Activated B cell treated with CpG ODN at 0.5 μM for 24 hours (primary cell): ENCODE measurements at regions of chr6 and their contacts with region 1.

Region 1: DNA sequence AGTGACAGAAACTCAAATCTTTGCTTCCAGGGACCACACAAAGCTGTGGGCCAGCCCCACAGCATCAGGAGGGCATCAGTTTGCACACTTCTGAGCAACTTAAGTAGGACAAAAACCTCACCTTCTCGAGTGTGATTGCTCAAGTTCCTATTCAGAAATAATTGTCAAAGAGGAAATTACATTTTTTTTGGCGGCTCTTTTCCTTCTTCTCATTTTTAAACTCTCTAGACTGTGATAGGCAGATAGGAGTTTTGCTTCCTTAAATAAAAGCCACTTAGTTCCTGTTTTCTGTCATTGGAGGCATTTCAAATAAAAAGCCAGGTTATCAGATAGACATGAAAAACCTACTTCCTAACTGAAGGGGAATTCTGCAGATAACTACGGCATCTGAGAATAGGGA is 11.2 kb upstream of the TAGAP start:
- DNase-seq: no peak
- ATAC-seq: peak; percentile 68
- H3K4me3 Mint-ChIP-seq: peak overlapping the region; percentile 70
- H3K27ac Mint-ChIP-seq: peak overlapping the region; percentile 88
- H3K4me1 Mint-ChIP-seq: peaks cover 79% of the 10 kb centered on the region
- H3K27me3 Mint-ChIP-seq: no peaks in the 10 kb centered on the region
- CTCF ChIP-seq: no peak

Region 2: GRCh38 chr6:159068904-159069578 is 13.0 kb after region 1 on chr6:
- CTCF ChIA-PET with region 1: no interaction called
- POLR2A ChIA-PET with region 1: interaction called, 5 read pairs
- intact Hi-C with region 1: loop called (anchors 1 kb)
- DNase-seq: no peak
- ATAC-seq: peak; percentile 42
- H3K4me3 Mint-ChIP-seq: peak overlapping the region; percentile 2
- H3K27ac Mint-ChIP-seq: peak overlapping the region; percentile 47
- H3K4me1 Mint-ChIP-seq: peaks cover 48% of the 10 kb centered on the region
- H3K27me3 Mint-ChIP-seq: no peaks in the 10 kb centered on the region
- CTCF ChIP-seq: no peak

Region 3: DNA sequence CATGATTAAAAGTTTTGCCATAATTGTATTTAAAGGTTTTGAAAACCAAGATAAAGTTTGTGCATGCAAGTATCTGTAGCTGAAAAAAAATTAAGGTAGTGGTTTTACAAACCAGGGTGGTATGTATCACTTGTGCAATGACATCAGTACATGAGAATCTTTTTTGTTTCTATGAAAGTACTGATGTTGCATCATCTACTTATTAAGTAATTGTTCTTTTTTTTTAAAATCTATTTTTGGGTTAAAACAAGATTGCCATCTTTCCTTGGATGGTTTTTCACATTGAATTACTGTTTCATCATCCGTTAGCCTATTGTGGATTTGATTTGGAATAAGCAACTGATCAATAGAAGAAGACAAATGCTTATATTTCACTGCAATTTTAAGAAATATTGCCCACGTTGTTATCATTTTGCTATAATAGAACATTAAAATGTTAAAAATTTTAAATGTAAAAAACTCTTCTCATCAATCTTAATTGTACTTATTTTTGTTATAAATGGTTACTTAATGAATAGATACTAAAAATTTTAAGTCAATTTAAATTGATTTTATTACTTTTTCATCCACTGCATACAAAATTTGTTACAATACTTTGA is 28.6 kb after region 1 on chr6:
- CTCF ChIA-PET with region 1: no interaction called
- POLR2A ChIA-PET with region 1: interaction called, 11 read pairs
- intact Hi-C with region 1: no loop called
- DNase-seq: no peak
- ATAC-seq: no peak
- H3K4me3 Mint-ChIP-seq: no peak overlapping the region
- H3K27ac Mint-ChIP-seq: no peak overlapping the region
- H3K4me1 Mint-ChIP-seq: peaks cover 30% of the 10 kb centered on the region
- H3K27me3 Mint-ChIP-seq: no peaks in the 10 kb centered on the region
- CTCF ChIP-seq: no peak

Region 4: GRCh38 chr6:159467473-159468041 is 411.6 kb after region 1 on chr6:
- CTCF ChIA-PET with region 1: no interaction called
- POLR2A ChIA-PET with region 1: no interaction called
- intact Hi-C with region 1: no loop called
- DNase-seq: no peak
- ATAC-seq: peak; percentile 34
- H3K4me3 Mint-ChIP-seq: no peak overlapping the region
- H3K27ac Mint-ChIP-seq: no peak overlapping the region
- H3K4me1 Mint-ChIP-seq: peaks cover 26% of the 10 kb centered on the region
- H3K27me3 Mint-ChIP-seq: peaks cover 2% of the 10 kb centered on the region
- CTCF ChIP-seq: no peak